Right cardiac atrium (tissue), 5 donors: ENCODE measurements at regions of chr12 and their contacts with region 1.

Region 1: GRCh38 chr12:80269803-80270552 is 170.6 kb downstream of the OTOGL start:
- DNase-seq: no peak
- ATAC-seq: peak; percentile 70 to 75
- H3K4me3 ChIP-seq: peak overlapping the region; percentile 27
- H3K27ac ChIP-seq: no peak overlapping the region
- H3K4me1 ChIP-seq: no peaks in the 10 kb centered on the region
- H3K27me3 ChIP-seq: no peaks in the 10 kb centered on the region

Region 2: GRCh38 chr12:79407671-79408622 is 862.0 kb before region 1 on chr12:
- intact Hi-C with region 1: loop called in 1 of 4 experiments (anchors 10 kb)
- DNase-seq: peak; percentile 37 to 61 (median 48)
- ATAC-seq: peak; percentile 86 to 94
- H3K4me3 ChIP-seq: no peak overlapping the region
- H3K27ac ChIP-seq: no peak overlapping the region
- H3K4me1 ChIP-seq: no peaks in the 10 kb centered on the region
- H3K27me3 ChIP-seq: no peaks in the 10 kb centered on the region

Region 3: DNA sequence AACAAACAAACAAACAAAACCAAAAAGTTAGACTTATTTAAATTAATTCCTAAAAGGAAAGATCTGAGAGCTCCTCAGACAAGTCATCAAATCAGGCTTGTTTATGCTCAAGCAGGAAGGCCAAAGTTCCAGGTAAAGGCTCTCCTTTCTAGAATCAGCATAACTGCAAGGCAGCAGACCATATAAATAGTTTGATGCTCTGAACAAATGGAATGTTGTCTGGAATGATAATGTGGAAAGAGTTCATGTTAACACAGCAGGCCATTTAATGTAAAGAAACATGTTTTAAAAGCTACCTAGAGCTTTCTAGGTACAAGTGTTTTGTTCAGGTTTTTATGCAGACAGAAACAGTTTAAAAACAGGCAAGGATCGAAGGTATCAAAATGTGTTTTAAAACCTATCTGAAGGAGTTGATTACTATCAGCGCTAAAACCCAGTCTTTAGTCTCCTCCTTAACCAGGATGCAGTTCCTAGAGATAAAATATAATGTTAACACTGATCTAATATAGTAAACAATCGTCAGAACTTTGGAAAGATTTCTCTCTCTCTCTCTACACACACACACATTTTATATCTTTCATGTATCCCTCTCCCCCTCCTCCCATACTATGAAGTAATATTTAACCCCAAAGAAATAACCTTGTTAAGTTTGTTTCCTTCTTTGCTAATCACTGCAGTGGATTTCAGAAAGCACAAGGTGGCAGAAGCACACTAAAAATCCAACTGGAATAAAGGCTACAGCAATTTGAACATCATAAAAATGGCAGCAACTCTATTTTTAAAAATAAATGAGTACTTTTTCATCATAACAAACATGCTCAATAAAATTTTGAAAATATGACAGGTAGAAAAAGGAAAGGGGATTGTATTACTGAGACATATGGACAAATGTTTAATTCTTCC is 714.7 kb before region 1 on chr12:
- intact Hi-C with region 1: loop called in 1 of 4 experiments (anchors 10 kb)
- DNase-seq: no peak
- ATAC-seq: peak in 1 of 2 donors; percentile 36
- H3K4me3 ChIP-seq: no peak overlapping the region
- H3K27ac ChIP-seq: no peak overlapping the region
- H3K4me1 ChIP-seq: no peaks in the 10 kb centered on the region
- H3K27me3 ChIP-seq: no peaks in the 10 kb centered on the region

Region 4: GRCh38 chr12:80195074-80195726 is 74.8 kb before region 1 on chr12:
- intact Hi-C with region 1: loop called (anchors 5 kb)
- DNase-seq: peak in 1 of 3 donors; percentile 43
- ATAC-seq: peak; percentile 57 to 76
- H3K4me3 ChIP-seq: no peak overlapping the region
- H3K27ac ChIP-seq: no peak overlapping the region
- H3K4me1 ChIP-seq: no peaks in the 10 kb centered on the region
- H3K27me3 ChIP-seq: no peaks in the 10 kb centered on the region

Region 5: GRCh38 chr12:80200408-80200807 is 69.6 kb before region 1 on chr12:
- intact Hi-C with region 1: loop called (anchors 5 kb)
- DNase-seq: no peak
- ATAC-seq: no peak
- H3K4me3 ChIP-seq: no peak overlapping the region
- H3K27ac ChIP-seq: no peak overlapping the region
- H3K4me1 ChIP-seq: no peaks in the 10 kb centered on the region
- H3K27me3 ChIP-seq: no peaks in the 10 kb centered on the region

Region 6: DNA sequence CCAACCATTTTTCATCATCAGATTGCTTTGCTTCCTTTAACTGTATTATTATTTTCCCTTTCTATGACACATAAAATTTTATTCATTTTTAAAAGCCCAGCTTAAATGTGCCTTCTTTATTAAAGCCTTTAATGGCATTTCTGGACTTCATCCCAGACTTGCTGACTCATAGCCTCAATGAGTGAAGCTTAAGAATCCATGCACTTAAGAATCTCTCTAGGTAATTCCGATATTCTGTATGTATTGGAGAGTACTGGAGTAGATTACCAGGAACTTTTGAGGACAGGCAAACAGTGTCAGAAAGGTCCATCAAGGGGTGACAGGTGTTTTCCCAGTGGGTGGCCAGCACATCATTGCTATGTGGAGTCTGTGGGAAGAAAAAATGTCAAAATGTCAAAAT is 281.9 kb after region 1 on chr12:
- intact Hi-C with region 1: no loop called
- DNase-seq: no peak
- ATAC-seq: no peak
- H3K4me3 ChIP-seq: no peak overlapping the region
- H3K27ac ChIP-seq: no peak overlapping the region
- H3K4me1 ChIP-seq: no peaks in the 10 kb centered on the region
- H3K27me3 ChIP-seq: no peaks in the 10 kb centered on the region